ENCODE measurements at regions of chr11 and their contacts with region 1.

Region 1: GRCh38 chr11:133705074-133705648 is 140.2 kb downstream of the SPATA19 start:
- DNase-seq: no peak

Region 2: DNA sequence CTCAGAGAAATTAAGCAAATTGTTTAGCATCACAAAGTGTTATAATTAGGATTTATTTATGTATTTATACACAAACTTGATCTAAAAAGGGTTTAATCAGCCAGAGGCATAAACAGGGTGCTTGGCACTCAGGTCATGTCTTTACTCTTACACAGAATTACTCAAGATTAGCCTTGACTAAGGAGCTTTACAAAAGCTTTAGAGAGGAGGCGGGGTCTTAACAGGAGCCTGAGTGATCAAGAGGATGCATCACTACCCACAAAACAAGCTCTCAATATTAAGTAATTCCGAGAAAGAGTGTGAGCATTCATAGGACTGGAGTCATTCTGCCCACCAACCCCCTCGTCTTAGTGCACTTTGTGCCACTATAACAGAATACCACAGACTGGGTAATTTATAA is 37.2 kb after region 1 on chr11:
- intact Hi-C with region 1: no loop called
- DNase-seq: no peak

Region 3: DNA sequence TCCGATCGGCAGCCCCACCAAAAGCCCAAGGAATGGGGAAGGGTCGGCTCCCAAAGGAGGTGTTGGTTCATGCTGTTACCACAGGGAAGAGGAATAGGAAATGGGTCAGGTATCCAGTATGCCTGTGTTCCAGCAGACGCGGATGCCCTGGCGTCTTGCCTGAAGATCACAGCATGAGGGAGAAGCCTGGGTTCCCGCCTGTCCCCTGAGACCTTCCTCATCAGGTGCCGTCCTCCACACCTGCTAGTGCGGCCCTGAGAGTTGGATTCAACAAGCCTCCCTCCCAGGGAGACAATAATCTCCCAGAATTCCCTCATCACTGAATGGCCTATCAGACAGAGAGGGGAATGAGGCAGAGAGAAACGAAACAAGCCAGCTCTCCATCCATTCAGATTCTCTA is 48.0 kb after region 1 on chr11:
- intact Hi-C with region 1: loop called in 1 of 2 experiments (anchors 2 kb)
- DNase-seq: no peak

Region 4: DNA sequence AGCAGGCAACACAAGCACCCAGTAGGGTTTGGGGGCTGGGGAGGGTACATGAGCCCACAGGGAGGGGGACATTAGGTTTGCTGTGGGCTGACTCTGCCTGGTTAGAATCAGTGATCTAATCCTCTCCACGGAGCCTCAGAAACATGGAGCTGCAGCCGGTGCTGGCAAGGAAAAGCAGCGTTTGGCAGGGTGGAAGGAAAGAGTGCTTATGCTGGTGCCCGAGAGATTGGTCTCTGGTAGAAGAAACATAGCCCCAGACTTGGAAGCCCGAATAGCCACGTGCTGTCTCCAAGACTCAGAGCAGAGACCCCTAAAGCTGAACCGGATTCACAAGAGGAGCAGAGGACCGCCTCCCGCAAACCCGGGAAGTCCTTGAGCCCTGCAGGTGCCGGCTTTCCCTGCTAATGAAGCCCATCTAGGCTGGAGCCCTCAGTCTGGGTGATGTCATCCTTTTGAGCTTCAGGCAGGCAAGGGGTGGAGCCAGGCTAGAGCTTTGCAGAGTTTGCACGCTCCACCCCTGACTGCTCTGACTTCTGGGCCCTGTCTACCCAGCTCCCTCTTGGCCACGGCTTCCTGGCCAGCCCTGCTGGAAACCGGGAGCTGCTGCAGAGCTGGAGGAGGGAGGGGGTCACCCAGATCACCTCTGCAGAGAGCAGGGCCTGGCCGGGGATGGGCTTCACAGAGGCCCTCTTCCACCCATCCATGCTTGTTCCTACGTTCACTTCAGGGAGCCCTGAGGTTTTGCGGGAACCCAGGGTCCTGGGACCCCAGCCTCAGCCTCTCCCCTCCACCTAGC is 328.7 kb after region 1 on chr11:
- intact Hi-C with region 1: no loop called
- DNase-seq: peak; percentile 93

Measured in posterior vena cava (tissue), 2 donors.